HCT116 (cell line): ENCODE measurements at regions of chr14 and their contacts with region 1.

Region 1: DNA sequence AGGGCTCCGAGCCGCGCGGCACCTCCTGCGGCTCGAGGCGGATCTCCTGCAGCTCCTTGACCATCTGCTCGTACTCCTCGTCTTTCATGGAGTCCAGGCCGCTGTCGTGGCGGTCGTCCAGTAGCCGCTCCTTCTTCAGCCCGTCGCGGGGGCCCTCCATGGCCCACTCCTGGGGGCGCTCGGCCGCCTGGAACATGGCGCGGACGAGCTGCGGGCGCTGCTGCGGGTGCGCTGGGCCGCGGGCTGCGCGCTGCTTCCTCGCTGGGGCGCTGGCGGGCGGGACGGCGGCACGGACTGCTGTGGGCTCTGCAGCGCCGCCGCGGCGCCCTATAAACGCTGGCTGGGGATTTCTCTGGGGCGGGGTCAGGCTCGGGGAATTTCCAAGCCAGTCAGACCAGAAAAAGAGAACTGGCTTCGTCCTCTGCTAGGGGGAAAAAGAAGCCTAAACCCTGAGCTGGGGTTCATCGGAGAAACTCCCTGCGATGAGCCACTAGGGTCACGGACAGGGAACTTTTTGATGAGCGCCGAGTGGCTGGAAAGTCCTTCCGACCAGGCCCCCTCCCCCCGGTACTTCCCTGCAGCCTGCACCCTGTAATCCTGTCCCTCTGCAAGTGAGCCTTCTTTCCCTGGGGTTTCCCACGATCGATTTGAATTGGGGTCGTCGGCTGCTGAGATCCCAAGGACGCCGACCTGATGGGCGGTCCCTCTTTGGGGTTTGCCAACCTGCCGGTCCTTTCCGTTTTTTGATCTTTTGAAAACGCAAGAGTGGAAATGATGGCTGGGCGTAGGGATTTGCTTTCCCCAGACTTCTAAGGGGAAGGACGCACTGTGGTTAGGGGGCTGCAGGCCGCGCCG is at the start of gene NFKBIA:
- DNase-seq: peak; percentile 52
- ATAC-seq: peak; percentile 84
- H3K4me3 ChIP-seq: peak within 1 kb of the TSS; percentile 77 to 92
- H3K27ac ChIP-seq: peak within 1 kb of the TSS; percentile 98
- H3K4me1 ChIP-seq: peaks cover 24 to 25% of the 10 kb centered on the region in 2 experiments
- H3K27me3 ChIP-seq: no peaks in the 10 kb centered on the region
- CTCF ChIP-seq: peak; percentile 19 to 36 (median 22); a peak in 3 of 6 replicates
- POLR2A ChIP-seq: peak; percentile 93
- RAD21 ChIP-seq: peak; percentile 43
- total RNA-seq, gene NFKBIA: 42.6 TPM

Region 2: DNA sequence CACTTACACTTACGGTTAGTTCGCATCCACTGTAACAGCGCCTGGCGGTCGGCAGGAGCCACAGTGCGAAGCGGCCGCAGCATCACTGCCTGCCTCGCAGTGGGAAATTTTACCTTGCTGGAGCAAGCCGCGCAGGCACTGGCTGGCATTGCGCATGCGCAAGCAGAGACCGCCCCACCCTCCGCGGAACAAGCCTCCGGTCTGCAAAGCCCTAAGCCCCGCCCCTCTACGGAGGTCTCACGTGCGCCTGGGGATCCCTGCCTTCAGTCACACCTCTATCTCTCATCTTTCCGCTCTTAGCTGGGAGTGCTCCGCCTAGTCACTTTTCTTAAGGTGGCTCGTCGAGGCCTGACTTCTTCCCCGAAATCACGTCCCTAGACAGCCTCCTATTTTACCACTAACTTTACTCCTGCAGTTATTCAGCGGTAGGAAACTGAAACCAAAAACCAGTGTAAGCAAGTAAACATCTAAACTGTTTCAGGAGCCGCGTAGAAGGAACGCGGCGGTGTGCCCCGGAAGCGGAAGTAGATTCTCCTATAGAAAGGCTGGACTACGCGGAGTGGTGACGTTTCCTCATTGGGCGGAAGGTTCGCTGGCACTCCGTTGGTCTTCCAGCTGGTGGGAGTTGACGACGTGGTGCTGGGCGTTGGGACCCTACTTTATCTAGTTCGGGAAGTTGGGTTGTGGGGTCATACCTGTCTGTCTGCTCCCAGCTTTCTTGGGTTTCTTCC is 422.1 kb before region 1 on chr14 and contains the start of gene SRP54:
- CTCF ChIA-PET with region 1: no interaction called
- POLR2A ChIA-PET with region 1: no interaction called
- RAD21 ChIA-PET with region 1: no interaction called
- intact Hi-C with region 1: loop called (anchors 5 kb)
- DNase-seq: peak; percentile 97
- ATAC-seq: peak; percentile 88
- H3K4me3 ChIP-seq: peak within 1 kb of the TSS; percentile 76 to 94
- H3K27ac ChIP-seq: peak within 1 kb of the TSS; percentile 91
- H3K4me1 ChIP-seq: peaks cover 11 to 17% of the 10 kb centered on the region in 2 experiments; a peak in 3 of 4 replicates
- H3K27me3 ChIP-seq: no peaks in the 10 kb centered on the region
- CTCF ChIP-seq: peak in 1 of 3 experiments; percentile 27; a peak in 1 of 6 replicates
- POLR2A ChIP-seq: peak; percentile 91
- RAD21 ChIP-seq: no peak
- total RNA-seq, gene SRP54: 53.0 TPM

Region 3: DNA sequence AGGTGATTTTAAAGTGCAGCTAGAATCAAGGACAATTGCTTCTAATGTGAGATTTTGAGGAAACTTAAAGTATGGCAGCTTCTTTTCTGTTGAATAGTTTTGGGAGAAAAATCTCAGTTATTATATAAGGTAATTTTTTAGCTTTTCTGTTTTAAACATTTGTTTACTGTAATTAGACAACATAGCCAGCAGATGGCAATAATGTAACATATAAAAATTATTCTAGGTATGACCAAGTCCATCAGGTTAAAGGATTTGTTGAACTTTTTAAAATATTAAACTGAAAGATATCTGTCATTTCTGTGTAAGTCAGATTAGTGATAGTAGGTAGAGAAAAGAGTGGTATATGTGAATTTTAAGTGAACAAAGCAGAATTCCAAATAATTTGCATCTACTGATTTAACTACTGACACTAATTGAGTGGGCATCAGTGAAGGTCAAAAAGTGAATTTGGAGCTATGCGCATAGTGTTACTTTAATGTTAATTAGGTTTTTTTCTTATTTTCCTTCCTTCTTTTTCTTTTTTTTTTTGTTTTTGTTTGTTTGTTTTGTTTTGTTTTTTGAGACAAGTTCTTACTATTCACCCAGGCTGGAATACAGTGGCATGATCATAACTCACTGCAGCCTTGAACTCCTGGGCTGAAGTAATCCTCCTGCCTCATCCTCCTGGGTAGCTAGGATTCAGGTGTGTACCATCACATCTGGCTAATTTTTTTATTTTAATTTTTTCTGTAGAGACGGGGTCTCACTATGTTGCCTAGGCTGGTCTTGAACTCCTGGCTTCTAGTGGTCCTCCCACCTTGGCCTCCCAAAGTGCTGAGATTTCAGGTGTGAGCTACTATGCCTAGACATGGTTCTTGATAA is 263.7 kb before region 1 on chr14:
- CTCF ChIA-PET with region 1: interaction called, 8 read pairs
- POLR2A ChIA-PET with region 1: interaction called, 3 read pairs
- RAD21 ChIA-PET with region 1: no interaction called
- intact Hi-C with region 1: loop called (anchors 1 kb)
- DNase-seq: no peak
- ATAC-seq: no peak
- H3K4me3 ChIP-seq: no peak overlapping the region
- H3K27ac ChIP-seq: no peak overlapping the region
- H3K4me1 ChIP-seq: no peaks in the 10 kb centered on the region
- H3K27me3 ChIP-seq: no peaks in the 10 kb centered on the region
- CTCF ChIP-seq: peak in 2 of 3 experiments; percentile 39 to 46; a peak in 3 of 6 replicates
- POLR2A ChIP-seq: no peak
- RAD21 ChIP-seq: peak; percentile 60

Region 4: GRCh38 chr14:35229495-35230089 is 175.1 kb before region 1 on chr14:
- CTCF ChIA-PET with region 1: interaction called, 9 read pairs
- POLR2A ChIA-PET with region 1: interaction called, 4 read pairs
- RAD21 ChIA-PET with region 1: no interaction called
- intact Hi-C with region 1: loop called (anchors 2 kb)
- DNase-seq: no peak
- ATAC-seq: peak; percentile 62; the same call in 1 of the 2 replicates
- H3K4me3 ChIP-seq: no peak overlapping the region
- H3K27ac ChIP-seq: no peak overlapping the region
- H3K4me1 ChIP-seq: no peaks in the 10 kb centered on the region
- H3K27me3 ChIP-seq: no peaks in the 10 kb centered on the region
- CTCF ChIP-seq: peak; percentile 25 to 52 (median 44); a peak in 4 of 6 replicates
- POLR2A ChIP-seq: no peak
- RAD21 ChIP-seq: peak; percentile 62

Region 5: GRCh38 chr14:35331605-35332516 is 72.8 kb before region 1 on chr14:
- CTCF ChIA-PET with region 1: no interaction called
- POLR2A ChIA-PET with region 1: no interaction called
- RAD21 ChIA-PET with region 1: no interaction called
- intact Hi-C with region 1: loop called (anchors 5 kb)
- DNase-seq: peak; percentile 49
- ATAC-seq: peak; percentile 62
- H3K4me3 ChIP-seq: peak overlapping the region in 1 of 2 experiments; percentile 21; a peak in 2 of 4 replicates
- H3K27ac ChIP-seq: peak overlapping the region; percentile 42
- H3K4me1 ChIP-seq: peaks cover 53 to 54% of the 10 kb centered on the region in 2 experiments
- H3K27me3 ChIP-seq: no peaks in the 10 kb centered on the region
- CTCF ChIP-seq: no peak
- POLR2A ChIP-seq: no peak
- RAD21 ChIP-seq: peak; percentile 19; the same call in 1 of the 2 replicates